ENCODE measurements at regions of chr18 and their contacts with region 1.

Region 1: DNA sequence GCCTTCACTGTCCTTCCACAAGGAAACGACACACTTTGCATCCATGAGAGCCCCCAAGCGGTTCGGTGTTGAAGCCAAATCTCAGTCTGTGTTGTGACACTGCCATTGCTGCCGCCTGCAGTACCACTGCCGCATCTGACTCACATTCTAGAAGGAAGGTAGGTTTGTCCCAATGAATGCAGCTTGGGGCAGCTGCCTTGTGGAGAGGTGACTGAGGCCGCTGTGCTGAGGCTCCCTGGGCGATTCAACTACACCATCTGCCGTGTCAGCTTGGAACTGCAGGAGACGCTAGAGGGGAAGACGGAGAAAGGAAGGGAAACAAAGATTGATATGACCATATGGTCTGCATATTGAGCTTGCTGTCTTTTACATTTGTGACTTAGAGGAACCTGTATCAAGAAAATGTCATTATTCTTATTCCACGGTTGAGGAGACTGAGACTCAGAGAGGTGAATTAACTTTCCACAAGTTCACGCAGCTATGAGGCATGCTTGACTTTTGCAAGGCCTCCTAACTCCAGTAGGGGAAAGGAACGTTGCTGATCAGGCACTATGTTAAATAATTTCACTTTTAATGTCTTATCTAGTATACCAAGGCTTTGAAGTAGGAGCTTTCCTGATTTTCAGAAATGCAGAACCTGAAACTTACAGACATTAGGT is 43.5 kb upstream of the LMAN1 start:
- DNase-seq: peak; percentile 4
- H3K4me3 ChIP-seq: no peak overlapping the region
- H3K27me3 ChIP-seq: no peaks in the 10 kb centered on the region
- CTCF ChIP-seq: peak; percentile 99

Region 2: DNA sequence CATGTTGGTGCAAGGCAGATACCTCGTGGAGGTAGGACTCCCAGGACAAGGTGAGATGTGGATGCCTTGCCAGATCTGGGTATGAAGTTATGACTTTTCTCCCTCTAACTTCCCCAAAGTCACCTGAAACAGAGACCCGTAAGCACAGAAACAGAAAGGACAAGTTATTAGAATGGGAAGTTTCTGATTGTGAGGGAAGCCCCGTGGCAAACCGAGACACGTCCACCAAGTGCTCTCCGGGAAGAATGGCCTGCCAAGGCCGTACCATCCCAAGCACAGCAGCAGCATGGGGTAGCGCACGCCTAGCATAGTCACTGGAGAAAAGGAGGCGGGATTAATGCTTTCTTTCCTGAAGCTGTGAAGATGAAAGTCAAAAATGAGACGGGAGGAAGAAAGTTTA is 427.3 kb before region 1 on chr18:
- CTCF ChIA-PET with region 1: no interaction called
- POLR2A ChIA-PET with region 1: no interaction called
- DNase-seq: no peak
- H3K4me3 ChIP-seq: no peak overlapping the region
- H3K27me3 ChIP-seq: no peaks in the 10 kb centered on the region
- CTCF ChIP-seq: no peak

Region 3: DNA sequence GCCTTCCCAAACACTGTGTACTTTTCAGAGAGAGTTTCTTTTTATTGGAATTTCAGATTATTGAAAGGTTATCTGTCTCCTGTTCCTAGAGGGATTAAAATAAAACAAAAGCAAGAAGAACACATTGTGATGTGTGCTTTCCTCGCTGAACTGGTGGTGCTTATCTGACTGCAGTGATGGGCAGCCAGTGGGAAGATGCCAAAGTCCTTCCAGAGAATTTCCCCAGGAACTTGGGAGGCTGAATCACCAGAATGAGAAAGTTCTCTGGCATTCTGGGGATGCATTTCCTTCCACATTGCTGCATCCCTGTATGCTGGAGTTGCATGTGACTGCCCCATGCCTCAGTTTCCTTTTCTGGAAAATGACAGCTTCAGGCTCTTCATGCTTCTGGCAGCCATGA is 316.8 kb before region 1 on chr18:
- CTCF ChIA-PET with region 1: interaction called, 16 read pairs
- POLR2A ChIA-PET with region 1: no interaction called
- DNase-seq: no peak
- H3K4me3 ChIP-seq: no peak overlapping the region
- H3K27me3 ChIP-seq: peaks cover 1% of the 10 kb centered on the region
- CTCF ChIP-seq: no peak

Region 4: DNA sequence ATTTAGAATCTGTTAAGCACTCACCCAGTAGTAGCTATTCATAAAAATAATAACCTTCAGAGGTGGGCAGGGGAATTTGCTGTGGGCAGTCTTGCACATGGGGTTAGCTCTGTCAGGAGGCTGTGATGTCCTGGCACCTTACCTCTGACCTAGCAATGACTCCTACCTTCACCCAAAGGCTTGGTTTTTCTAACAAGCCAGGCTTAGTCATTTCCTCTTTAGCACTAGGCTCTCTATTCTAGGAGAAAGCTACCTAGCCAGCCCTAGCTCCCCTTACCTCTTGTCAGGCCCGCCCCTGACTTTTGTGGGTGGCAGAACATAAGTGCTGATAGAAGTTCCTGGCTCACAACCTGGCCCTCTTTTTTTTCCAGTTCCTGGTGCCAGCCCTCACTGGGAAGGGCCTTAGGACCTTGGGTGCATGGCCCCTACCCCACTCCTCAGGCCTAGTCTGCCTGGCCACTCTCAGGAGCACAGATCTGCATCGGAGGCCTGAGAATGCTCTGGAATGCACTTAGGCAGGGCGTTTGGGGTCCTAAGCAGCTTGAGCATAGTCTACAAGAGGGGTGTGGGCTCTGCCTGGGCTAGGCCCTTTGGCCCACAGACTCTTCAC is 101.8 kb before region 1 on chr18:
- CTCF ChIA-PET with region 1: interaction called, 110 read pairs
- POLR2A ChIA-PET with region 1: no interaction called
- DNase-seq: no peak
- H3K4me3 ChIP-seq: no peak overlapping the region
- H3K27me3 ChIP-seq: peaks cover 22% of the 10 kb centered on the region
- CTCF ChIP-seq: no peak

Region 5: DNA sequence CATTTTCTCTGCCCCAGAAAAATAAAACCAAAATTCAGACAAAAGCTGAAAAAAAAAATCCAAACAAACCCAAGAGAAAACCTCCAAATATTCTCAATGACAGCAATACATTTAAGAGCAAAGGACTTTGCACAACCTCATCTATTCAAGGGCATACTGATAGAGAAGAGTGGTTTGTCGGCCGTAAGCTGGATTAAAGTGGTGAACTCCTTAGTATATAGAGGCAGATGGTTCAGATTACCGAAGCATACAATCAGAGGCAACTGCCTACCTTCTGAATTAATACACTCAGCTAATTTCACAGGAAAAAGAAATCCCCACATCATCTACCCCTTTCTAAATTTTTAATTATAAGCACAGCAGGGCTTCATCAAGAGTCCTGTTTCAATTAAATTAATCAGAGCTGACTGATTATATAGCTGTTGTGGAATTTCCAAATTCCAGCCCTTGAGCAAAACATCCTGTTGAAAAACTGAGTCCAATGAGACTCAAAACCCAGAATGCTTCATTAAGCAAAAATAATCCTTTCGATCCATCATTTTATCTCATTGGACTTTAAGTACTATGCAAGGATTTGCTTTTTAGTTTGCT is 84.0 kb before region 1 on chr18 and contains the start of gene CPLX4:
- CTCF ChIA-PET with region 1: interaction called, 16 read pairs
- POLR2A ChIA-PET with region 1: no interaction called
- DNase-seq: no peak
- H3K4me3 ChIP-seq: no peak within 1 kb of the TSS
- H3K27me3 ChIP-seq: no peaks in the 10 kb centered on the region; the same call in 1 of the 2 replicates
- CTCF ChIP-seq: no peak
- polyA plus RNA-seq, gene CPLX4: not detected in 2 replicates

Region 6: DNA sequence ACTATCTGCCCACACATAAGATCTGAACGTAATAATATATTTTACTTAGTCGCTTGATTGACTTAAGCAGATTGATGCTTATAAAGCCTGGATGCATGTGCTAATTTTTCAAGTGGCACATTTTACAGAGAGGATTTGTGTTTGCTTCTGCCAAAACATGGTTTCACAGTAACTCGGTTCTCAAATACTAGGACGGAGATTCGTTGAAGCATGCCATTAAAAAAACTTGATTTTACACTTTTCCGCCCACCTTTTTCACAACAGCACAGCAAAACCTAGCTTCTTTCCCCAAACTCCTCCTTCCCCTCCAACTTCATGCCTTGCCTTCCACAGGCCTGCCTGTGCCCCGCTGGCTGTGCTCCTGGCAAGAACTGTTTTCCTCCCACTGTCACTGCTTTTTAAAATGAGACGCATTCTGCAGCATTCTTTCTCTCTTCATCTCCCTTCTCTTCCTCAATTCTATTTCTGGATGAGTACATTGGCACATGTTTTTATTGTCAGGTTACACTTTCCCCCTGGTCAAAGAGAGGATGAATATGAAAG is 11.6 kb after region 1 on chr18:
- CTCF ChIA-PET with region 1: interaction called, 13 read pairs
- POLR2A ChIA-PET with region 1: no interaction called
- DNase-seq: no peak
- H3K4me3 ChIP-seq: no peak overlapping the region
- H3K27me3 ChIP-seq: no peaks in the 10 kb centered on the region
- CTCF ChIP-seq: no peak

Region 7: DNA sequence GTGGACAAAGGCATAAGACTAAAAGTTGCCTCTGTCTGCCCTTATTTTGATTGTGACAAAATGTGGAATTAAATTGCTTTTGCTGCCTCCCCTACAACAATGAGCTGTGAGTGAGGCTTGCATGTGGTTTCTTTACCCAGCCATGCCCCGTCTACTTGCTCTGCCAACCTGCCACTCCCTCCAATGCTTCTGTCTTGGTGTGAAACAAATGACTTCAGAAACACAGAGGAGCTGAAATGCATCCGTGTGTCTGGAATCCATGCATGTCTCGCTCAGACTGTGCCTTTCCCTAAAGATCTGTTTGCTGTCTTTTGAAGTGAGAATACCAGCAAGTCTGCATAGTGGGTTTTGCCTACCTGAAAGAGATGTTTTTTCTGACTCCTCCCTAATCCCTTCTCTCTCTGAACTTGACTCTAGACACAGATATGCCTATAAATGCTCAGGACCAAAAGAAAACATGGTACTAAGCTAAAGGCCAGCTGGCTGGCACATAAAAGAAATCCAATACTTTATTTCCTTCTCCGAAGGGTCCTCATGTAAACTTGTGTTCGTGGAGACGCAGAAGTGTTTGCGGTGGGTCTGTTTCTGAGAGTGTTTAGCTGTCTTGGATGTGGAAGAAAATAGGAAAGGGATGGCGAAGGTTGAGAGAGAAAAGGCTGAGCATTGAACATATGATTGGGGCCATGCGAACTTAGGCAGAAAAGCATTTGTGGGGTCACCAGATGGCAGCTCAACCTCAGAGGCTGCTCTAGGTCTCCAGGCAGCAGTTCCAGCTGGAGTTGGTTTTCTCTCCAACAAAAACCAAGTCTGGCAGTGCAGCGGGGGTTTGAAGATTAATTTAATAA is 174.2 kb after region 1 on chr18:
- CTCF ChIA-PET with region 1: no interaction called
- POLR2A ChIA-PET with region 1: no interaction called
- DNase-seq: no peak
- H3K4me3 ChIP-seq: no peak overlapping the region
- H3K27me3 ChIP-seq: no peaks in the 10 kb centered on the region
- CTCF ChIP-seq: no peak

Measured in BJ (cell line).